MCF 10A (cell line): ENCODE measurements at regions of chr16 and their contacts with region 1.

Region 1: DNA sequence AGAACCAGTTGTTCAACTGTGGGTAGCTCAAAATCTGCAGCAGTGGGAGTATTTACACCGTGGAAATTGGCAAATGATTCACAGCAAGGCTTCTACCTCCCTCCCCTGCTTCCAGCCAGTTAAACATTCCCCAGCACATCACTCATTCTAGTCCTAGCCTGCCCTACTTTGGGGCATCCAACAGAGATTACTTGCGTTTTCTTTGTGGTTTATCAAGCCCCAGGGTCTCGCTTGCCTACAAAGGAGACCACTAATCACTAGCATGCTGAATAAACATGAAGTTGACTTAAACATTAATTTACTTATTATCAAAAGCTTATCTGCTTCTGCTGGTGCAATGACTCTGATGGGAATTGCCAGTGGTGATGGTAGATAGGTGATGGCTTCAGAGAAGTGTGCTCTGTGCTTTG is 94.5 kb downstream of the MARF1 start:
- DNase-seq: no peak
- H3K4me3 Mint-ChIP-seq: no peak overlapping the region
- H3K27ac Mint-ChIP-seq: no peak overlapping the region
- H3K4me1 Mint-ChIP-seq: no peaks in the 10 kb centered on the region
- H3K27me3 Mint-ChIP-seq: no peaks in the 10 kb centered on the region
- CTCF ChIP-seq: no peak

Region 2: GRCh38 chr16:15404792-15405191 is 143.7 kb before region 1 on chr16:
- CTCF ChIA-PET with region 1: no interaction called
- POLR2A ChIA-PET with region 1: no interaction called
- intact Hi-C with region 1: no loop called
- DNase-seq: peak; percentile 79
- H3K4me3 Mint-ChIP-seq: no peak overlapping the region
- H3K27ac Mint-ChIP-seq: no peak overlapping the region
- H3K4me1 Mint-ChIP-seq: peaks cover 11% of the 10 kb centered on the region
- H3K27me3 Mint-ChIP-seq: no peaks in the 10 kb centered on the region
- CTCF ChIP-seq: no peak

Region 3: DNA sequence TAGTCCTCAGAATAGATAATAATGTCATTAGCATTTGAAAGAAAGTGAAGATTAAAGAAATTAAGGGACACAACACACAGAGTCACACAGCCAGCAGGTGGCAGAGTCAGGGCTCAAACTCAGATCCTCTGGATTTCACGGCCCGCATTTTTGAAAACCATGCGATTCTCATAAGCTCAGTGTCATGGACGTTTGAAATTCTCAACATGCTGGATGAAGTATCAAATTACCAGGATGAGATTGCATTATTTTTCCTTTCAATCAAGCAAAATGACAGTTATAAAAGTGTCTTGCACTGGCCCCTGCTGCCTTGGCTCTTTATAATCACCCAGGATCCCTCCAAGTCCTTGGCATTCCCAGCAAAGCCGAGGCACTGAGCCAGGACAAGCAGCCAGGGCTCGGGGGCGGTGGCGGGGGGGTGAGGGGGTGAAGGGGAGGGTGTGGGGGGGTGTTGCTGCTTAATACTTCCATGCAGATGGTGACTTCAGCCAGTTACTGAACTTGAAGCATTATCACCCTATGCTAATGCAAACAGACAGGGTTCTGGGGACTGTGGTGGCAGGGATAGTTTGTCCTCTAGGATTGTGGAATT is 120.7 kb before region 1 on chr16:
- CTCF ChIA-PET with region 1: interaction called, 10 read pairs
- POLR2A ChIA-PET with region 1: no interaction called
- intact Hi-C with region 1: no loop called
- DNase-seq: peak; percentile 75
- H3K4me3 Mint-ChIP-seq: no peak overlapping the region
- H3K27ac Mint-ChIP-seq: no peak overlapping the region
- H3K4me1 Mint-ChIP-seq: no peaks in the 10 kb centered on the region
- H3K27me3 Mint-ChIP-seq: no peaks in the 10 kb centered on the region
- CTCF ChIP-seq: peak; percentile 49

Region 4: GRCh38 chr16:15487336-15488284 is 60.9 kb before region 1 on chr16:
- CTCF ChIA-PET with region 1: interaction called, 4 read pairs
- POLR2A ChIA-PET with region 1: no interaction called
- intact Hi-C with region 1: loop called (anchors 2 kb)
- DNase-seq: no peak
- H3K4me3 Mint-ChIP-seq: no peak overlapping the region
- H3K27ac Mint-ChIP-seq: no peak overlapping the region
- H3K4me1 Mint-ChIP-seq: peaks cover 25% of the 10 kb centered on the region
- H3K27me3 Mint-ChIP-seq: no peaks in the 10 kb centered on the region
- CTCF ChIP-seq: no peak

Region 5: DNA sequence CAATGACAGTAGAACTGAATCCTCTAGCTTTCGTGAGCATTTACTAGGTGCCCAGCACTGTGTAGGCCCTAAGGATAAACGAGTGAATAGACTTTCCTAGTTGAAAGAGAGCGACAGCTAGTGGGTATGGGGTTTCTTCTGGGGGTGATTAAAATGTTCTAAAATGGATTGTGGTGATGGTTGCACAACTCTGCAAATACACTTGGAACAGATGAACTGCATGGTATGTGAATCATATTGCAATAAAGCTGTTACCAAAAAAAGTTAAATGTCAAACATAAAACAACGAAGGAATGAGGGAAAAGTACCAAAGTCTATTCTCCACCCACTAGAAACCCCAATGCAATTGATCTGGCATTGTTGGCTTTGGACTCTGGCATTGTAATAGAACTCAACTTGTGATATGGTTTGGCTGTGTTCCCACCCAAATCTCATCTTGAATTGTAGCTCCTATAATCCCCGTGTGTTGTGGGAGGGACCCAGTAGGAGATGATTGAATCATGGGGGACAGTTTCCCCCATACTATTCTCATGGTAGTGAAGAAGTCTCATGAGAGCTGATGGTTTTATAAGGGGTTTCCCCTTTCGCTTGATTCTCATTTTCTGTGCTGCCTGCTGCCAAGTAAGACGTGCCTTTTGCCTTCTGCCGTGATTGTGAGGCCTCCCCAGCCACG is 24.0 kb after region 1 on chr16:
- CTCF ChIA-PET with region 1: interaction called, 11 read pairs
- POLR2A ChIA-PET with region 1: no interaction called
- intact Hi-C with region 1: no loop called
- DNase-seq: peak; percentile 68
- H3K4me3 Mint-ChIP-seq: no peak overlapping the region
- H3K27ac Mint-ChIP-seq: no peak overlapping the region
- H3K4me1 Mint-ChIP-seq: peaks cover 29% of the 10 kb centered on the region
- H3K27me3 Mint-ChIP-seq: no peaks in the 10 kb centered on the region
- CTCF ChIP-seq: no peak

Region 6: GRCh38 chr16:15618392-15618791 is 69.9 kb after region 1 on chr16:
- CTCF ChIA-PET with region 1: no interaction called
- POLR2A ChIA-PET with region 1: no interaction called
- intact Hi-C with region 1: no loop called
- DNase-seq: no peak
- H3K4me3 Mint-ChIP-seq: no peak overlapping the region
- H3K27ac Mint-ChIP-seq: peak overlapping the region; percentile 50
- H3K4me1 Mint-ChIP-seq: peaks cover 6% of the 10 kb centered on the region
- H3K27me3 Mint-ChIP-seq: no peaks in the 10 kb centered on the region
- CTCF ChIP-seq: no peak